GM12878 (cell line): ENCODE measurements at regions of chr12 and their contacts with region 1.

Region 1: DNA sequence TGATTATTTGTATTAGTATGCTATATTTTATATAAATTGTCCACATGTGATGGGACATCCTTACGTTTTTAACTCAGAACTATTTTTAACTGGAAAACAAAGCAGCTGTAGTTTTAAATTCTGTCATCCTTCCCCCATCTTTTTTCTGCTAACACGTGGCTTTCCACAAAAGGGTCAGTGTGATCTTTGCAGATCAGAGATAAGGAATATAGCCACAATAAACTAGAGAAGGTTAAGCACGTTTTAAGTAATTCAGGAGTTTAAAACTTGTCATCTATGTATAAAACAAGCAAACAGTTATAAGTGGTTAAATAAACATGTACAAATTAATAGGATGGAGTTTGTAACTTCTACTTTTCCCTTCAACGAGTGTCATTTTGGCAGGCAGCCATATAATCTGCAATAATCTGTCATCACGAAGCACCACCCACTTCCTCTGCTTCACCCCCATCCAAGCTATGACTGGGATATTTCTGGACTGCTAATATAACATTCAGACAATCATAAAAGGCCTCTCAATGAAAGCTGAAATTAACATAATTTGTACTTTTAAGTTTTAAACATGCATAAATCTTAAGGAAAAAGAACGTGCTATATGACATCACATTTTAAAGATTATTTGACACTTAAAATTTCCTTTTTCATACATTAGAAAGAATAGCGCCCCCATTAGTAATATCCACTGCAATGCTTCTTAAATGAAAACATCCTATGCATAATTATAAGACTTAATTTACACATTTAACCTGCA is 15.3 kb downstream of the TAOK3 start:
- DNase-seq: peak; percentile 62
- ATAC-seq: peak; percentile 80
- H3K4me3 ChIP-seq: peak overlapping the region; percentile 67
- H3K27ac ChIP-seq: peak overlapping the region; percentile 89
- H3K4me1 ChIP-seq: peaks cover 6% of the 10 kb centered on the region; the same call in 1 of the 2 replicates
- H3K27me3 ChIP-seq: no peaks in the 10 kb centered on the region
- CTCF ChIP-seq: peak in 2 of 3 experiments; percentile 34 to 40; a peak in 2 of 6 replicates
- EP300 ChIP-seq: no peak
- POLR2A ChIP-seq: no peak
- RAD21 ChIP-seq: no peak

Region 2: GRCh38 chr12:118164798-118165486 is 192.5 kb before region 1 on chr12:
- CTCF ChIA-PET with region 1: interaction called, 25 read pairs
- POLR2A ChIA-PET with region 1: interaction called, 3 read pairs
- RAD21 ChIA-PET with region 1: interaction called, 3 read pairs
- SMC1A ChIA-PET with region 1: interaction called, 6 read pairs
- in situ Hi-C with region 1: no loop called
- intact Hi-C with region 1: no loop called
- DNase-seq: no peak
- ATAC-seq: 0 out of 3 replicates have a peak, but pooled peaks have one; percentile 13
- H3K4me3 ChIP-seq: no peak overlapping the region
- H3K27ac ChIP-seq: no peak overlapping the region
- H3K4me1 ChIP-seq: peaks cover 24% of the 10 kb centered on the region
- H3K27me3 ChIP-seq: no peaks in the 10 kb centered on the region
- CTCF ChIP-seq: peak; percentile 45 to 56 (median 45)
- EP300 ChIP-seq: no peak
- POLR2A ChIP-seq: no peak
- RAD21 ChIP-seq: peak; percentile 72

Region 3: GRCh38 chr12:118187751-118188435 is 169.5 kb before region 1 on chr12:
- CTCF ChIA-PET with region 1: interaction called, 76 read pairs
- POLR2A ChIA-PET with region 1: interaction called, 10 read pairs
- RAD21 ChIA-PET with region 1: interaction called, 67 read pairs
- SMC1A ChIA-PET with region 1: interaction called, 62 read pairs
- in situ Hi-C with region 1: no loop called
- intact Hi-C with region 1: loop called (anchors 5 kb)
- DNase-seq: no peak
- ATAC-seq: no peak
- H3K4me3 ChIP-seq: no peak overlapping the region
- H3K27ac ChIP-seq: no peak overlapping the region
- H3K4me1 ChIP-seq: peaks cover 23% of the 10 kb centered on the region
- H3K27me3 ChIP-seq: no peaks in the 10 kb centered on the region
- CTCF ChIP-seq: no peak
- EP300 ChIP-seq: no peak
- POLR2A ChIP-seq: no peak
- RAD21 ChIP-seq: no peak

Region 4: GRCh38 chr12:118237052-118237665 is 120.3 kb before region 1 on chr12:
- CTCF ChIA-PET with region 1: interaction called, 7 read pairs
- POLR2A ChIA-PET with region 1: interaction called, 3 read pairs
- RAD21 ChIA-PET with region 1: interaction called, 20 read pairs
- SMC1A ChIA-PET with region 1: interaction called, 11 read pairs
- in situ Hi-C with region 1: no loop called
- intact Hi-C with region 1: loop called (anchors 5 kb)
- DNase-seq: peak; percentile 65
- ATAC-seq: peak; percentile 93
- H3K4me3 ChIP-seq: no peak overlapping the region
- H3K27ac ChIP-seq: peak overlapping the region; percentile 75
- H3K4me1 ChIP-seq: peaks cover 26% of the 10 kb centered on the region
- H3K27me3 ChIP-seq: no peaks in the 10 kb centered on the region
- CTCF ChIP-seq: no peak
- EP300 ChIP-seq: peak; percentile 27 to 76; a peak in 1 of 4 replicates
- POLR2A ChIP-seq: no peak
- RAD21 ChIP-seq: no peak

Region 5: DNA sequence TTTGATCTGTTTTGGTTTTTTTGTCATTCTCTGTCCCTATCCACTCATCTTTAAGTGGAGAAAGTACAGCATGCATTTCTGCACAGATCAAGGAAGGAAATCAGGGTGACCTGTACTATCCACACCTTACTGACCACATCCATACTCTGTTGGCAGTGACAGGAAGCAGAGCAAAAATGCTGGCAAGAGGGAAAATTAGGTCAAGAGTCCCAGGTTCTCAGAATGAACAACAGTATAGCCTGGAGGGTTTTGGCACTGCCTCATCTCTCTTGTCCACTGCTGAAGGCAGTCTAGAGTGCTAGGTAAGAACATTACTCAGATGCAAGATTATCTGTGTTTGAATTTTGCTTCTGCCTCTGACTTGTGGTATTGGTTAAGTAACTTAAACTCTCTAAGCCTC is 55.4 kb before region 1 on chr12:
- CTCF ChIA-PET with region 1: interaction called, 55 read pairs
- POLR2A ChIA-PET with region 1: interaction called, 20 read pairs
- RAD21 ChIA-PET with region 1: interaction called, 48 read pairs
- SMC1A ChIA-PET with region 1: interaction called, 58 read pairs
- in situ Hi-C with region 1: no loop called
- intact Hi-C with region 1: loop called (anchors 2 kb)
- DNase-seq: no peak
- ATAC-seq: peak; percentile 45
- H3K4me3 ChIP-seq: no peak overlapping the region
- H3K27ac ChIP-seq: peak overlapping the region; percentile 48; the same call in 1 of the 2 replicates
- H3K4me1 ChIP-seq: peaks cover 29% of the 10 kb centered on the region
- H3K27me3 ChIP-seq: no peaks in the 10 kb centered on the region
- CTCF ChIP-seq: no peak
- EP300 ChIP-seq: no peak
- POLR2A ChIP-seq: no peak
- RAD21 ChIP-seq: no peak

Region 6: GRCh38 chr12:118312578-118312977 is 44.9 kb before region 1 on chr12:
- CTCF ChIA-PET with region 1: interaction called, 67 read pairs
- POLR2A ChIA-PET with region 1: interaction called, 20 read pairs
- RAD21 ChIA-PET with region 1: interaction called, 54 read pairs
- SMC1A ChIA-PET with region 1: interaction called, 96 read pairs
- in situ Hi-C with region 1: loop called (anchors 5 kb)
- intact Hi-C with region 1: loop called (anchors 2 kb)
- DNase-seq: peak; percentile 73
- ATAC-seq: peak; percentile 87
- H3K4me3 ChIP-seq: peak overlapping the region; percentile 47; the same call in 1 of the 2 replicates
- H3K27ac ChIP-seq: peak overlapping the region; percentile 82
- H3K4me1 ChIP-seq: peaks cover 40% of the 10 kb centered on the region
- H3K27me3 ChIP-seq: no peaks in the 10 kb centered on the region
- CTCF ChIP-seq: no peak
- EP300 ChIP-seq: peak in 1 of 2 experiments; percentile 38; a peak in 2 of 4 replicates
- POLR2A ChIP-seq: no peak
- RAD21 ChIP-seq: no peak

Region 7: DNA sequence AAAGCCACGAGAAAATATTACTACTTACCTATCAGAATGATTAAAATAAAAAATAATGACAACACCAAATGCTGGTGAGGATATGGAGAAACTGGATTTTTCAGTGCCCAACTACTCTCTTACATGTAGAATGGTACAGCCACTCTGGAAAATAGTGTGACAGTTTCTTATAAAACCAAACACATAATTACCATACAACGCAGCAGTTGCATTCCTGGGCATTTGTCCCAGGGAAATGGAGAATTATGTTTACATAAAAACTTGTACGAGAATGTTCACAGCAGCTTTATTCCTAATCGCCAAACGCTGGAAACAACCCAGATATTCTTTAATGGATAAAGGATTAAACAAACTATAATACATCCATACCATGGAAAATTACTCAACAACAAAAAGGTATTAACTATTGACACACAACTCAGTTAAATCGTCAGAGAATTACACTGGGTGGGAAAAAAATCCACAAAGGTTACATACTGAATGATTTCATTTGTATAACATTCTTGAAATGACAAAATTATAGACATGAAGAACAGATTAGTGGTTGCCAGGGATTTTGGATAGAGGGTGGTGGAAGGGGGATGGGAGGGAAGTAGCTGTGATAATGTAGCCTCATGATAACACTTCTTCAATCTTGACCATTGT is 20.1 kb before region 1 on chr12:
- CTCF ChIA-PET with region 1: interaction called, 9 read pairs
- POLR2A ChIA-PET with region 1: interaction called, 21 read pairs
- RAD21 ChIA-PET with region 1: interaction called, 7 read pairs
- SMC1A ChIA-PET with region 1: interaction called, 29 read pairs
- in situ Hi-C with region 1: no loop called
- intact Hi-C with region 1: no loop called
- DNase-seq: no peak
- ATAC-seq: no peak; the same call in 2 of the 3 replicates
- H3K4me3 ChIP-seq: no peak overlapping the region
- H3K27ac ChIP-seq: no peak overlapping the region
- H3K4me1 ChIP-seq: peaks cover 3% of the 10 kb centered on the region; the same call in 1 of the 2 replicates
- H3K27me3 ChIP-seq: no peaks in the 10 kb centered on the region
- CTCF ChIP-seq: no peak
- EP300 ChIP-seq: no peak
- POLR2A ChIP-seq: no peak
- RAD21 ChIP-seq: no peak

Region 8: DNA sequence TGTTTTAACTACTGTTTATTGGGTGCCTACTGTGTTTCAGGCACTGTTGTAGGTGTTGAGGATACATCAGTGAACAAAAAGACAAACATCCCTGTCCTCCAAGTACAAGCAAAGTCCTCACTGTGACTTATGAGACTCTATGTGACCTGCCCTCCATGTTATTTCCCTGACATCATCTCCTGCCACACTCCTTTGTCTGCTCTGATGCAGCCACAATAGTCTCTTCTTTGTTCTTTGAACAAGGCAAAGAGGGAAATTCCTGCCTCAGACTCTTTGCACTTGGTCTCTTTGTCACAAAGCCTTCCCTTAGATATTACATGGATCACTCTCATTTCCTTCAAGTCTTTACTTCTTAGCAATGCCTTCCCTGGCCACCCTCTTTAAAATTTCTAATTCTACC is 383.8 kb after region 1 on chr12:
- CTCF ChIA-PET with region 1: no interaction called
- POLR2A ChIA-PET with region 1: no interaction called
- RAD21 ChIA-PET with region 1: no interaction called
- SMC1A ChIA-PET with region 1: no interaction called
- in situ Hi-C with region 1: no loop called
- intact Hi-C with region 1: no loop called
- DNase-seq: no peak
- ATAC-seq: no peak
- H3K4me3 ChIP-seq: no peak overlapping the region
- H3K27ac ChIP-seq: no peak overlapping the region
- H3K4me1 ChIP-seq: no peaks in the 10 kb centered on the region
- H3K27me3 ChIP-seq: no peaks in the 10 kb centered on the region; a peak in 1 of 4 replicates
- CTCF ChIP-seq: no peak
- EP300 ChIP-seq: no peak
- POLR2A ChIP-seq: no peak
- RAD21 ChIP-seq: no peak